ENCODE measurements at regions of chr17 and their contacts with region 1.

Region 1: GRCh38 chr17:979538-980405 is at the start of gene NXN:
- DNase-seq: peak; percentile 82 to 93
- H3K4me3 ChIP-seq: peak within 1 kb of the TSS; percentile 98
- H3K4me3 Mint-ChIP-seq: peak within 1 kb of the TSS; percentile 99
- H3K27ac Mint-ChIP-seq: peak within 1 kb of the TSS; percentile 91
- H3K4me1 ChIP-seq: peaks cover 23% of the 10 kb centered on the region
- H3K4me1 Mint-ChIP-seq: peaks cover 20% of the 10 kb centered on the region
- H3K27me3 ChIP-seq: no peaks in the 10 kb centered on the region
- H3K27me3 Mint-ChIP-seq: no peaks in the 10 kb centered on the region
- CTCF ChIP-seq: peak in 1 of 2 experiments; percentile 29
- total RNA-seq, gene NXN: 68.4 and 76.7 TPM in 2 replicates

Region 2: GRCh38 chr17:781805-782731 is 197.7 kb before region 1 on chr17 and contains the starts of genes GLOD4 and MRM3:
- CTCF ChIA-PET with region 1: interaction called, 6 read pairs
- POLR2A ChIA-PET with region 1: interaction called, 5 read pairs
- intact Hi-C with region 1: loop called (anchors 1 kb)
- DNase-seq: peak; percentile 76 to 89
- H3K4me3 ChIP-seq: peak within 1 kb of the TSS; percentile 64
- H3K4me3 Mint-ChIP-seq: peak within 1 kb of the TSS; percentile 93
- H3K27ac Mint-ChIP-seq: peak within 1 kb of the TSS; percentile 96
- H3K4me1 ChIP-seq: no peaks in the 10 kb centered on the region
- H3K4me1 Mint-ChIP-seq: no peaks in the 10 kb centered on the region
- H3K27me3 ChIP-seq: no peaks in the 10 kb centered on the region
- H3K27me3 Mint-ChIP-seq: no peaks in the 10 kb centered on the region
- CTCF ChIP-seq: no peak
- total RNA-seq, gene GLOD4: 69.7 and 74.0 TPM in 2 replicates
- total RNA-seq, gene MRM3: 11.0 and 14.1 TPM in 2 replicates

Region 3: GRCh38 chr17:852349-852748 is 127.4 kb before region 1 on chr17:
- CTCF ChIA-PET with region 1: interaction called, 11 read pairs
- POLR2A ChIA-PET with region 1: no interaction called
- intact Hi-C with region 1: no loop called
- DNase-seq: no peak
- H3K4me3 ChIP-seq: no peak overlapping the region
- H3K4me3 Mint-ChIP-seq: no peak overlapping the region
- H3K27ac Mint-ChIP-seq: no peak overlapping the region
- H3K4me1 ChIP-seq: no peaks in the 10 kb centered on the region
- H3K4me1 Mint-ChIP-seq: no peaks in the 10 kb centered on the region
- H3K27me3 ChIP-seq: no peaks in the 10 kb centered on the region
- H3K27me3 Mint-ChIP-seq: no peaks in the 10 kb centered on the region
- CTCF ChIP-seq: no peak

Region 4: GRCh38 chr17:933312-934083 is 46.3 kb before region 1 on chr17:
- CTCF ChIA-PET with region 1: interaction called, 3 read pairs
- POLR2A ChIA-PET with region 1: interaction called, 12 read pairs
- intact Hi-C with region 1: loop called (anchors 2 kb)
- DNase-seq: peak; percentile 82 to 90
- H3K4me3 ChIP-seq: no peak overlapping the region
- H3K4me3 Mint-ChIP-seq: peak overlapping the region; percentile 67
- H3K27ac Mint-ChIP-seq: peak overlapping the region; percentile 98
- H3K4me1 ChIP-seq: peaks cover 81% of the 10 kb centered on the region
- H3K4me1 Mint-ChIP-seq: peaks cover 47% of the 10 kb centered on the region
- H3K27me3 ChIP-seq: no peaks in the 10 kb centered on the region
- H3K27me3 Mint-ChIP-seq: no peaks in the 10 kb centered on the region
- CTCF ChIP-seq: no peak

Region 5: DNA sequence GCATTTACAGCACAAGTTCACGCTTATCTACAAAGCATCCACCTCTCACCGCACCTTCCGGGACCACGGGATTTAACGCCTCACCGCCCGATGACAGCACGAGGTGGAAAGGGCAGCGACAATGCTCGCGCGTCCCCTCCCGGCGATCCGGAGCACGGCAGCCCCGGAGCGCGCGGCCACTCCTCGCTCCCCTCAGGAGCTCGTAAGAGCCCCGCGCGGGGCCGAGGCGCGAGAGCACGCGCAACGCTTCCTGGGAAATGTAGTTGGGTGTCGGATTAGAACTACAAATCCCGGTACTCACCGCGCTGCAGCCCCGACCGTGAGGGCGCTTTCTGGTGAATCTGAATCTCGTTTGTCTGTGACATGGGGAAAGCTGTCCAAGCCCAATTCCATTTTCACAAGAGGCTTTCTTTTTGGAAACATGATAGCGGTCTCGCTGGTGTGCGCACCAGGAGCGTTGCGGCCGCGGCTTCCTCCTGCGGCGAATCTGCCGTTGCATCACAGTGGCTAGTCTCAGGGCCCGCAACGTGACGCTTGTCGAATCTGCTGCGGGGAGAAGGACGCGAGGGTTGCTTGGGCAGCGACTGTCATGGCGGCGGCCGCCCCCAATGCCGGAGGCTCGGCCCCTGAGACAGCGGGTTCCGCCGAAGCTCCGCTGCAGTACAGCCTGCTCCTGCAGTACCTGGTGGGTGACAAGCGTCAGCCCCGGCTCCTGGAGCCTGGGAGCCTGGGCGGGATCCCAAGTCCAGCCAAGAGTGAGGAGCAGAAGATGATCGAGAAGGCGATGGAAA is 17.0 kb after region 1 on chr17 and contains the start of gene TIMM22:
- CTCF ChIA-PET with region 1: interaction called, 21 read pairs
- POLR2A ChIA-PET with region 1: interaction called, 10 read pairs
- intact Hi-C with region 1: no loop called
- DNase-seq: peak; percentile 97
- H3K4me3 ChIP-seq: peak within 1 kb of the TSS; percentile 87
- H3K4me3 Mint-ChIP-seq: peak within 1 kb of the TSS; percentile 97
- H3K27ac Mint-ChIP-seq: peak within 1 kb of the TSS; percentile 99
- H3K4me1 ChIP-seq: peaks cover 10% of the 10 kb centered on the region
- H3K4me1 Mint-ChIP-seq: peaks cover 11% of the 10 kb centered on the region
- H3K27me3 ChIP-seq: no peaks in the 10 kb centered on the region
- H3K27me3 Mint-ChIP-seq: no peaks in the 10 kb centered on the region
- CTCF ChIP-seq: peak; percentile 93 to 95
- total RNA-seq, gene TIMM22: 20.1 and 20.6 TPM in 2 replicates

Measured in Caco-2 (cell line).